ENCODE measurements at regions of chr10 and their contacts with region 1.

Region 1: GRCh38 chr10:75395066-75395931 is 6.3 kb downstream of the ZNF503 start:
- DNase-seq: no peak
- ATAC-seq: peak; percentile 65
- H3K4me3 ChIP-seq: peak overlapping the region; percentile 71 to 81
- H3K27ac ChIP-seq: peak overlapping the region; percentile 93
- H3K4me1 ChIP-seq: peaks cover 15 to 37% of the 10 kb centered on the region in 2 experiments; a peak in 3 of 4 replicates
- H3K27me3 ChIP-seq: no peaks in the 10 kb centered on the region
- CTCF ChIP-seq: peak in 2 of 3 experiments; percentile 80 to 89; a peak in 4 of 6 replicates
- POLR2A ChIP-seq: peak; percentile 35
- RAD21 ChIP-seq: no peak

Region 2: DNA sequence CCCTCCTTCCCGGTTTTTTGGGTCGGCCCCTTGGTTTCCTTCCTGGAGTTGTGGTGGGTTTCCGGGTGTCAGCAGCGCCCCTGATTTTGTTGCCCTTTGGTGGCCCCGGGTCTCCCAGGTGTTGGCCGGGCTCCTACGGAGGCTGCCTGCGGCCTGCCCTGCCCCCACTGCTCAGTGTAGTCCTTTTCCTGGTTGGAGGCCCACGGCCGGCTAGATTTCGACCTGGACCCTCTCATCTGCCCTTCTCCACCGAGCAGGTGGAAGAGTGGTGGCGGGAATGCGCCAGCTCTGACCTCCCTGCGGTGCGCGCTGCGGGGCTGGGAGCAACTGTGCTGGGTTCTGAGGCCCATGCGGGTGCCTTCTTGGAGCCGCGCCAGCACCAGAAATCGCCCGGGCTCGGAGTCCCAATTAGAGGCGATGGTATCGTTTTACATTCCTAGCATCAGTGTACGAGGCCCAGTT is 118.9 kb before region 1 on chr10:
- CTCF ChIA-PET with region 1: interaction called, 6 read pairs
- POLR2A ChIA-PET with region 1: interaction called, 6 read pairs
- RAD21 ChIA-PET with region 1: interaction called in 1 of 2 experiments, 7 read pairs
- intact Hi-C with region 1: loop called (anchors 1 kb)
- DNase-seq: no peak
- ATAC-seq: peak; percentile 61
- H3K4me3 ChIP-seq: peak overlapping the region; percentile 52 to 73
- H3K27ac ChIP-seq: peak overlapping the region; percentile 76
- H3K4me1 ChIP-seq: peaks cover 12 to 28% of the 10 kb centered on the region in 2 experiments
- H3K27me3 ChIP-seq: no peaks in the 10 kb centered on the region
- CTCF ChIP-seq: no peak
- POLR2A ChIP-seq: no peak
- RAD21 ChIP-seq: no peak

Region 3: GRCh38 chr10:76086761-76087639 is 691.7 kb after region 1 on chr10:
- CTCF ChIA-PET with region 1: interaction called, 11 read pairs
- POLR2A ChIA-PET with region 1: interaction called, 3 read pairs
- RAD21 ChIA-PET with region 1: no interaction called
- intact Hi-C with region 1: loop called (anchors 1 kb)
- DNase-seq: no peak
- ATAC-seq: peak; percentile 83
- H3K4me3 ChIP-seq: no peak overlapping the region
- H3K27ac ChIP-seq: no peak overlapping the region
- H3K4me1 ChIP-seq: peaks cover 16 to 31% of the 10 kb centered on the region in 2 experiments
- H3K27me3 ChIP-seq: peaks cover 9% of the 10 kb centered on the region
- CTCF ChIP-seq: peak; percentile 58 to 82 (median 81); a peak in 5 of 6 replicates
- POLR2A ChIP-seq: no peak
- RAD21 ChIP-seq: peak; percentile 86

Region 4: DNA sequence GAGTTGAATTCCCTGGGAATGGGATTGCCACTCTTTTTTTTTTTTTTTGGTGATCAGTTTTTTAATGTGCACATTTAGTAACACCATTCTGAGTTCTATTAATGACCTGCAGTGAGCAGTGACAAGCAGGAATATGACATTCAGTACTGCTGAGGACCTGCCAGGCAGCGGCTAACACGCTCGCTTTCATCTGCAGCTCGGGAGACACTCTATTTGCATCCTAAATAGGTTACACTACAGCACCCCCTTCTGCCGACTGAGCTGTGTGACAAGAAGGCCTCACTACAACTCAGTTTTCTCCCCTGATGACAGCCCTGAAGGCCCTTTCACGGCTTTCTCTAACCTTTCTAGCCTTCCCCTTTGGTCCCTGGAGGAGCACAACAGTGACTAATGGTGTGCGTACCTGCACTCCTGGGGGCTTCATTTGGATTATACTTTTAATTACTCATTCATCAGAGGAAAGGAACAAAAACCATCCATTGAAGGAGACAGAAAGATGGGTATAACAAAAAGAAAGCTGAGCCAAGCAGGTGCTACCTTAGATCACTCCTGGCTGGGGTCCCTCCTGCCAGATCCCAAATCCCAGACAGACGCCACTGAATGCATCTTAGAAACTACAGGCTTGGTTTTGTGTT is 908.5 kb after region 1 on chr10:
- CTCF ChIA-PET with region 1: interaction called, 15 read pairs
- POLR2A ChIA-PET with region 1: interaction called, 3 read pairs
- RAD21 ChIA-PET with region 1: no interaction called
- intact Hi-C with region 1: loop called (anchors 2 kb)
- DNase-seq: peak; percentile 28
- ATAC-seq: peak; percentile 92
- H3K4me3 ChIP-seq: no peak overlapping the region
- H3K27ac ChIP-seq: no peak overlapping the region
- H3K4me1 ChIP-seq: no peaks in the 10 kb centered on the region
- H3K27me3 ChIP-seq: peaks cover 14% of the 10 kb centered on the region; the same call in 1 of the 2 replicates
- CTCF ChIP-seq: peak; percentile 29 to 55 (median 45); a peak in 4 of 6 replicates
- POLR2A ChIP-seq: no peak
- RAD21 ChIP-seq: peak; percentile 69

Region 5: GRCh38 chr10:76547352-76547972 is 1152.2 kb after region 1 on chr10:
- CTCF ChIA-PET with region 1: no interaction called
- POLR2A ChIA-PET with region 1: no interaction called
- RAD21 ChIA-PET with region 1: no interaction called
- intact Hi-C with region 1: loop called (anchors 2 kb)
- DNase-seq: peak; percentile 64
- ATAC-seq: peak; percentile 76
- H3K4me3 ChIP-seq: no peak overlapping the region
- H3K27ac ChIP-seq: no peak overlapping the region
- H3K4me1 ChIP-seq: no peaks in the 10 kb centered on the region
- H3K27me3 ChIP-seq: peaks cover 11% of the 10 kb centered on the region; the same call in 1 of the 2 replicates
- CTCF ChIP-seq: peak; percentile 63 to 74 (median 70)
- POLR2A ChIP-seq: no peak
- RAD21 ChIP-seq: peak; percentile 74